Panc1 (cell line): ENCODE measurements at regions of chr3 and their contacts with region 1.

Region 1: DNA sequence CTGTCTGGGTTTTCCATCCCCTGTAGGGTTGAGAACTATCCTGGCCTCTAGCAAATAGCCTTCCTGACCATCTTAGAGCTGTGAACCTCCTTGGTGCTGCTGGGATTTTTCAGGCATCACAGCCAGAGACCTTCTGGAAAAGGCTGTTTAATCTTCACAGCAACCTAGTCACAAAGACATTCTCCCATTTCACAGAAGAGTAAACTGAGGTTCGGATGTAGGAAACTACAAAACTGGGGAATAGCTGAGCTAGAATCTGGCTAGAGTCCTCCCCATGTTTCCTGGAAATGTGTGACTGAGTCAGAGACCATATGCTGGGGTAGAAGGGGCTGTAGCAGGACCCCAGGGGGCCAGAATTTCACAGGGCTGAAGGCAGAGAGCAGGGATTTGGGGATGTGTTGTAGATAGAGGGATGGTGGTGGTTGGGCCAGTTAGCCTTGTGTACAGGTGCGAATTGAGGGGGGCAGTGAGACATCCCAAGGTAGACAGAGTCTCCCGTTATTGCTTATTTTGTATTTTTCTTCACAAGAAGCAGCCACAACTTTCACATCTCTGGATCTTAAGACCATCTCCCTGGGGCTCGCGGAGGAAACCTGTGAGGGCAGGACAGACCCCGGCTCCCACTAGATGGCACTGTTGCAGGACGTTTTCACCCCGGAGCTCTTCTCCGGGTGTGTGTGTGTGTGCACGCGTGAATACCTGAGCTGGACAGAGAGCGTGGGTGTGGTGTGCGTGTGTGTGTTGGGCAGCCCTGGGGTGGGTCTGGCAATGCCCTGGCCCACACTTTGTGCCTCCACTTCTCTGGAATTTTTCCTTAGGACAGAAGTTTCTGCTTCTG is 66.9 kb upstream of the PRR23C start:
- DNase-seq: peak; percentile 18
- ATAC-seq: peak; percentile 88
- H3K4me3 ChIP-seq: no peak overlapping the region
- H3K27ac ChIP-seq: peak overlapping the region; percentile 32; the same call in 1 of the 2 replicates
- H3K4me1 ChIP-seq: peaks cover 14% of the 10 kb centered on the region
- H3K27me3 ChIP-seq: no peaks in the 10 kb centered on the region
- CTCF ChIP-seq: peak; percentile 94

Region 2: DNA sequence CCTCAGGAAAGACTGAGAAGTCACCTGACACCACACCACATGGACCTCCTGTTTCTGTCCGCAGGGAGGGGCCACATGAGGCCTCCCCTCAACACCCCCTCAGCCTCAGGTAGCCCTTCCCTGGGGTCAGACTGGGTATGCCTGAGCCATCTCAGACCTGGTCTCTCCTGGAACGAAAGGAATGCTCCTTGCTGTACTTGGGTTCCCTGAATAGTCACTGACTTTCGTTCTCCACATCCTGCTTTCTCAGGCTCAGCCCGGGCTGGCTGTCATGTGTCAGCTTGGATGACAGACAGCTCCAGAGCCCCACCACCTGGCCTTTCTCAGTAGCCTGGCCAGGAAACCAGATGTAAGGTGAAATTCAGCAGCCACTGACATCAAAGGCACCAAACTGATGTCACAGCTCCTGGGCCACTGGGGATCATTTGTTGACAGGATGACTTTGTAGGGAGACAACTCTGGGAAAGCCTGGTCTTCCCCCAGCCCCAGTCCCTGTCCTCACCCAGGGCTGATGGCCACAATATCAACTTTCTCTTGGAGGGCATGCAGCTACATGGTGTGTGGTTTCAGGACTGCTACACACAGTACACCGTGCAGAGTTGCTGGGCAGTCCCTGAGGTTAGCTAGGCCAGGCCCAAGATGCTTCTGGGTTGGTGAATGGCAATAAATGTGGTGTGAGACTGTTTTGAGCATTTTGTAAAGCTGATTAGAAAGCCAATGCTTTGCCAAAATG is 90.8 kb after region 1 on chr3:
- CTCF ChIA-PET with region 1: no interaction called
- POLR2A ChIA-PET with region 1: no interaction called
- in situ Hi-C with region 1: no loop called
- intact Hi-C with region 1: loop called (anchors 5 kb)
- DNase-seq: peak; percentile 10
- ATAC-seq: peak; percentile 89
- H3K4me3 ChIP-seq: no peak overlapping the region
- H3K27ac ChIP-seq: peak overlapping the region; percentile 52; the same call in 1 of the 2 replicates
- H3K4me1 ChIP-seq: peaks cover 16% of the 10 kb centered on the region
- H3K27me3 ChIP-seq: no peaks in the 10 kb centered on the region
- CTCF ChIP-seq: peak; percentile 68

Region 3: GRCh38 chr3:139241783-139242182 is 130.2 kb after region 1 on chr3:
- CTCF ChIA-PET with region 1: no interaction called
- POLR2A ChIA-PET with region 1: no interaction called
- in situ Hi-C with region 1: no loop called
- intact Hi-C with region 1: no loop called
- DNase-seq: no peak
- ATAC-seq: no peak
- H3K4me3 ChIP-seq: no peak overlapping the region
- H3K27ac ChIP-seq: no peak overlapping the region
- H3K4me1 ChIP-seq: no peaks in the 10 kb centered on the region
- H3K27me3 ChIP-seq: peaks cover 3% of the 10 kb centered on the region; the same call in 1 of the 2 replicates
- CTCF ChIP-seq: 0 out of 2 replicates have a peak, but pooled peaks have one; percentile 16

Region 4: GRCh38 chr3:139329345-139329850 is 217.8 kb after region 1 on chr3:
- CTCF ChIA-PET with region 1: interaction called, 15 read pairs
- POLR2A ChIA-PET with region 1: no interaction called
- in situ Hi-C with region 1: no loop called
- intact Hi-C with region 1: loop called (anchors 2 kb)
- DNase-seq: peak; percentile 45
- ATAC-seq: peak; percentile 98
- H3K4me3 ChIP-seq: peak overlapping the region in 1 of 2 experiments; percentile 40; a peak in 2 of 4 replicates
- H3K27ac ChIP-seq: peak overlapping the region; percentile 71
- H3K4me1 ChIP-seq: peaks cover 7% of the 10 kb centered on the region
- H3K27me3 ChIP-seq: no peaks in the 10 kb centered on the region; the same call in 1 of the 2 replicates
- CTCF ChIP-seq: peak; percentile 100

Region 5: DNA sequence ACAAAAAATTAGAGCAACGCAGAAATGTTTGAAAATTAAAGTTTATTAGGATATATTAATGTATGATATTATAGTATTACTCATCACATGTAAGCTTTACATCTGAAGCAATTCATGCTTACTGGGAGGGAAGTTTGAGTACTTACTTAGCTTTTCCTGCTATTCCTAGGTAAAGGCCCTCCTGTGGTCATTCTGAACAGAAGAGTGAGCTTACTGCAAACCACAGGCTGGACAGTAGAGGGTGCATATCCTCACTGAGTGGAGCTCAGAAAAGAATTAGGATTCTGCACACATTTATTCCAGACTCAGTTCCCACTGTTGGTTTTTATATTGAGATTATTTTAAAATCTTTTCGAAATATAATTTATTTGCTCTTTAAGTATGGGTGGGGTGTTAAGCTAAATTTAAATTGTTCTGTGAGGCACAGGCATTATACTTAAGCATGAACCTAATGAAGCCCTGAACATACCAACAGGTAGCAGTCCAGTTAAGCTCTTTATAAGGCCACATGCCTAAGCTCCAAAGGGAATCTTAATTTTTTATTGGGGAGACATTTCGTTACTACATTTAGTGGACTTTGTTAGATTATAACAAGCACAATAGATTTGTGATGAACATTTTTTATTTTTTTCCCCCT is 242.4 kb after region 1 on chr3:
- CTCF ChIA-PET with region 1: interaction called, 11 read pairs
- POLR2A ChIA-PET with region 1: no interaction called
- in situ Hi-C with region 1: no loop called
- intact Hi-C with region 1: no loop called
- DNase-seq: peak; percentile 50
- ATAC-seq: peak; percentile 94
- H3K4me3 ChIP-seq: no peak overlapping the region
- H3K27ac ChIP-seq: no peak overlapping the region
- H3K4me1 ChIP-seq: no peaks in the 10 kb centered on the region
- H3K27me3 ChIP-seq: no peaks in the 10 kb centered on the region
- CTCF ChIP-seq: peak; percentile 91